Activated CD8-positive, alpha-beta T cell treated with anti-CD3 and anti-CD28 coated beads for 36 hours (primary cell): ENCODE measurements at regions of chr17 and their contacts with region 1.

Region 1: DNA sequence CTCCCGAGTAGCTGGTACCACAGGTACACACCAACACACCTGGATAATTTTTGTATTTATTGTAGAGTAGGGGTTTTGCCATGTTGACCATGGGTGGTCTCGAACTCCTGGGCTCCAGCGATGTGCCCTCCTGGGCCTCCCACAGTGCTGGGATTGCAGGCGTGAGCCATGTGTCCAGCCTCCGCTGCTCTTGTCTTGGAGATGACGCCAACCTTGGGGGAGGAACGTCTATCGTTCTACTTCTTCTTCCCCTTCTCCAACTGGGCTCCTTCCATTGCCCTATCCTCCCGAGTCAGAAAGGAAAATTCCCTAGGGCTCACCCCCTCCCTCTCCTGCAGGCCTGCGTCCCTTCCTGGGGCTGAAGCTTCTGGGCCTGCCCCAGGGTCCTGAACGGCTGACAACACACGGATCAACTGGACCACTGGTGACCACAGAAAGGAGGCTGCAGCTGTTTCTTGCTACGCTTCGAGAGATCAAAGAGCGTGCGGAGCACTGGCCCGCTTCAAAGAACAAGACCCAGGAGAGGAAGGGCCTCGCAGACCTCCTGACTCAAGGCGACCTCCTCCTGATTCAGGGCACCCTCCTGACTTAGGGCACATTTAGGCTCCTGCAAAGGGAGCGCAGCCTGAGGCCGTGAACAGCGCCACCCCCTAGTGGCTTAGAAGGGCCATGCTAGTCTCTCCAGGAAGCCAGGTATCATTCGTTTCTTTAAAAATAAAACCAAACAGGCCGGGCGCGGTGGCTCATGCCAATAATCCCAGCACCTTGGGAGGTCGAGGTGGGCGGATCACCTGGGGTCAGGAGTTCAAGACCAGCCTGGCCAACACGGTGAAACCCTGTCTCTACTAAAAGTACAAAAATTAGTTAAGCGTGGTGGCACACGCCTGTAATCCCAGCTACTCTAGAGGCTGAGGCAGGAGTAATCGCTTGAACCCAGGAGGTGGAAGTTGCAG is 48.5 kb upstream of the HELZ start:
- DNase-seq: peak; percentile 85
- ATAC-seq: peak; percentile 99
- H3K4me3 Mint-ChIP-seq: peak overlapping the region; percentile 33
- H3K27ac Mint-ChIP-seq: no peak overlapping the region
- H3K4me1 Mint-ChIP-seq: no peaks in the 10 kb centered on the region
- H3K27me3 Mint-ChIP-seq: no peaks in the 10 kb centered on the region
- CTCF ChIP-seq: peak; percentile 91

Region 2: DNA sequence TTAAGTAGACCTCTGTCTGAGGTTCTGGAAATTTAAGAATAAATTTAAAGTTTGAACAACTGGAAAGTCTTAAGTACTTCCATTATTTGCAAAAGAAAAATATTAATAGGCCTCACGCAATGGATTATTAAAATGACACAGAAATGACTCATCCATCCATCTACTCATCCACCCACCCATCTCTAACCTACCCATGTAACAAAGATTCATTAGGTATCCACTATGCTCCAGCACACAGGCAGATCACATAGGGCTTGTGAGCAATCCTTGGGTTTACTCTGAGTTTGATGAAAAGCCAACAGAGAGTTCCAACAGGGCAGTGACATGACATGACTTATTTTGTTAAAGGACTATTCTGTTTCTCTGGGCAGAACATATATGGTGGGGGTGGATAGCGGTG is 141.8 kb before region 1 on chr17:
- CTCF ChIA-PET with region 1: no interaction called
- POLR2A ChIA-PET with region 1: no interaction called
- intact Hi-C with region 1: no loop called
- DNase-seq: no peak
- ATAC-seq: no peak
- H3K4me3 Mint-ChIP-seq: no peak overlapping the region
- H3K27ac Mint-ChIP-seq: peak overlapping the region; percentile 21
- H3K4me1 Mint-ChIP-seq: peaks cover 12% of the 10 kb centered on the region
- H3K27me3 Mint-ChIP-seq: no peaks in the 10 kb centered on the region
- CTCF ChIP-seq: no peak

Region 3: GRCh38 chr17:67239597-67239996 is 53.9 kb before region 1 on chr17:
- CTCF ChIA-PET with region 1: interaction called, 11 read pairs
- POLR2A ChIA-PET with region 1: no interaction called
- intact Hi-C with region 1: no loop called
- DNase-seq: no peak
- ATAC-seq: no peak
- H3K4me3 Mint-ChIP-seq: no peak overlapping the region
- H3K27ac Mint-ChIP-seq: no peak overlapping the region
- H3K4me1 Mint-ChIP-seq: peaks cover 47% of the 10 kb centered on the region
- H3K27me3 Mint-ChIP-seq: no peaks in the 10 kb centered on the region
- CTCF ChIP-seq: no peak

Region 4: GRCh38 chr17:67280279-67280678 is 13.2 kb before region 1 on chr17:
- CTCF ChIA-PET with region 1: interaction called, 22 read pairs
- POLR2A ChIA-PET with region 1: no interaction called
- intact Hi-C with region 1: no loop called
- DNase-seq: no peak
- ATAC-seq: no peak
- H3K4me3 Mint-ChIP-seq: no peak overlapping the region
- H3K27ac Mint-ChIP-seq: no peak overlapping the region
- H3K4me1 Mint-ChIP-seq: no peaks in the 10 kb centered on the region
- H3K27me3 Mint-ChIP-seq: no peaks in the 10 kb centered on the region
- CTCF ChIP-seq: no peak

Region 5: GRCh38 chr17:67378454-67379250 is 85.1 kb after region 1 on chr17:
- CTCF ChIA-PET with region 1: no interaction called
- POLR2A ChIA-PET with region 1: no interaction called
- intact Hi-C with region 1: no loop called
- DNase-seq: peak; percentile 89
- ATAC-seq: peak; percentile 59
- H3K4me3 Mint-ChIP-seq: peak overlapping the region; percentile 73
- H3K27ac Mint-ChIP-seq: peak overlapping the region; percentile 90
- H3K4me1 Mint-ChIP-seq: peaks cover 52% of the 10 kb centered on the region
- H3K27me3 Mint-ChIP-seq: no peaks in the 10 kb centered on the region
- CTCF ChIP-seq: peak; percentile 69